PC-9 (cell line): ENCODE measurements at regions of chr3 and their contacts with region 1.

Region 1: DNA sequence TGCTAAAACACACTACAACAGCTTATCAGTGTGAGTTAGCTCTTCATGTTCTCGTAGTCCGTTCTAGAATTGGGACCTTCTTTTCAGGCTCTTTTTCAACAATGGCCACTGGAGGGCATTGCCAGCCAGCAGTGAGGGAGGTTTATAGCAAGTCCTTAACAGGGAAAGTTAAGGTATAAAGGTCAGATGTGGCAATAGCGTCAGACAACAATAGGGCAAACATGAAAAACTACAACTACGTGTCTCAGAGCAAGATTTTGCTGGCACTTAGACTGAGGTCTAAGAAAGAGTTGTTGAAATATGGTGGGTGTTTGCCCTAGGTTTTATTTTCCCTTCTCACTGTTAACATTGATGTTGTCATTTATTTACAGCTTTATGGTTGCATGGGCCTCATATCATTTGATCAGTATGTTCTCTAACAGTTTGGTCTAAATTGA is 161.4 kb downstream of the GMNC start:
- DNase-seq: peak; percentile 65 to 81
- H3K4me3 ChIP-seq: no peak overlapping the region
- H3K27ac ChIP-seq: no peak overlapping the region
- H3K4me1 ChIP-seq: peaks cover 21% of the 10 kb centered on the region; the same call in 1 of the 2 replicates
- H3K27me3 ChIP-seq: no peaks in the 10 kb centered on the region
- CTCF ChIP-seq: peak; percentile 87

Region 2: GRCh38 chr3:190224863-190225692 is 476.0 kb before region 1 on chr3:
- CTCF ChIA-PET with region 1: no interaction called
- POLR2A ChIA-PET with region 1: no interaction called
- intact Hi-C with region 1: loop called (anchors 2 kb)
- DNase-seq: peak in 1 of 2 experiments; percentile 12
- H3K4me3 ChIP-seq: no peak overlapping the region
- H3K27ac ChIP-seq: no peak overlapping the region
- H3K4me1 ChIP-seq: peaks cover 12% of the 10 kb centered on the region
- H3K27me3 ChIP-seq: no peaks in the 10 kb centered on the region
- CTCF ChIP-seq: peak; percentile 74

Region 3: GRCh38 chr3:190443257-190443656 is 257.9 kb before region 1 on chr3:
- CTCF ChIA-PET with region 1: interaction called, 3 read pairs
- POLR2A ChIA-PET with region 1: no interaction called
- intact Hi-C with region 1: loop called (anchors 5 kb)
- DNase-seq: no peak
- H3K4me3 ChIP-seq: no peak overlapping the region
- H3K27ac ChIP-seq: no peak overlapping the region
- H3K4me1 ChIP-seq: peaks cover 17% of the 10 kb centered on the region
- H3K27me3 ChIP-seq: no peaks in the 10 kb centered on the region
- CTCF ChIP-seq: peak; percentile 72

Region 4: GRCh38 chr3:190585805-190586630 is 115.1 kb before region 1 on chr3:
- CTCF ChIA-PET with region 1: interaction called, 6 read pairs
- POLR2A ChIA-PET with region 1: no interaction called
- intact Hi-C with region 1: loop called (anchors 5 kb)
- DNase-seq: peak; percentile 80 to 86
- H3K4me3 ChIP-seq: no peak overlapping the region
- H3K27ac ChIP-seq: peak overlapping the region; percentile 57
- H3K4me1 ChIP-seq: peaks cover 22% of the 10 kb centered on the region
- H3K27me3 ChIP-seq: no peaks in the 10 kb centered on the region
- CTCF ChIP-seq: no peak

Region 5: DNA sequence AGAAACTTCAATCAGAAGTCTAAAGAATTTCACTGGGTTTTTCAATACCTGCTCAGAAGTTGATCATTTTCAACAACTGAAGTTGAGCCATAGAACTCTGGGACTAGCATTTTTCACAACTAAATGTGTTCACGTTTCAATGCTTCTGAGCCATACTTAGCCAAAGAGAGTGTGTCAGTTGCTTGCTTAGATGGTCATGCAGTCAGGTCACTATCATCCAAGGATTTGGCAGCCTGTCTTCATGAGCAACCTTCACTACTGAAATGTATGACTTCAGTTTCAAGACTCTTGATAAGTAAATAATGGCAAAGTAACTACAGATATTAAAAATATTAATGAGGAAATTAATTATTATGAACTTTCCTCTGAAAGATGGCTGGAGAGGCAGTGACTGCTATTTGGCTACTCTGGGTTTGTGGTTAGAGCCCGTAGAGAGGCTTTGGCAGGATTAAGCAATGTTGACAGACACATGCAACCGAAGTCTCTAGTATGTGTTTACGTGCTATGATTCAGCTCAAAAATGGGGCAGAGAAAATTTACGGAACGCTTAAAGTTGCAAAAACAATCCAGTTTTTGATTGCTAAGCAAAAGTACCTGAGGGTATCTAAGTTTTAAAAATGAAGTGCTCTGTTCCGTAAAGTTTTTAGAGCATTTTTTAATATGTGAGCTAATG is 27.6 kb after region 1 on chr3:
- CTCF ChIA-PET with region 1: no interaction called
- POLR2A ChIA-PET with region 1: no interaction called
- intact Hi-C with region 1: no loop called
- DNase-seq: no peak
- H3K4me3 ChIP-seq: no peak overlapping the region
- H3K27ac ChIP-seq: no peak overlapping the region
- H3K4me1 ChIP-seq: no peaks in the 10 kb centered on the region
- H3K27me3 ChIP-seq: no peaks in the 10 kb centered on the region
- CTCF ChIP-seq: no peak

Region 6: DNA sequence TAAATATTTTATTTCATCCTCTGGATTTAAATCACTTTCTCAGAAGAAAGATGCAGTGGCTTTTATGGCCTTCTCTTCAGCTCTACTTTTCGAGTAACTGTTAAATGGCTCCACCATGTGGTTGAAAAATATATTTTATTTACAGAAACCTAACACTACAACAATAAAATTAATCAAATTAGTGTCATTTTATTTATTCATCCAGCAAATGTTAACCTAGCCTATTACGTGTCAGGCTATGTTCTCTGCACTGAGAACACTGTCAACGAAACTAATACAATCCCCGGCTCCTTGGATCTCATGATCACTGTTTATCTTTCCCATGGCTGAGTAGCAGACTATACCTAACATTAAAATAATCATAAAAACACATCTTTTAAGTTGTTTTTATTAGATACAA is 349.9 kb after region 1 on chr3:
- CTCF ChIA-PET with region 1: interaction called, 8 read pairs
- POLR2A ChIA-PET with region 1: no interaction called
- intact Hi-C with region 1: loop called (anchors 1 kb)
- DNase-seq: peak in 1 of 2 experiments; percentile 58
- H3K4me3 ChIP-seq: no peak overlapping the region
- H3K27ac ChIP-seq: no peak overlapping the region
- H3K4me1 ChIP-seq: no peaks in the 10 kb centered on the region
- H3K27me3 ChIP-seq: no peaks in the 10 kb centered on the region
- CTCF ChIP-seq: peak; percentile 87

Region 7: GRCh38 chr3:191412759-191413158 is 711.6 kb after region 1 on chr3:
- CTCF ChIA-PET with region 1: no interaction called
- POLR2A ChIA-PET with region 1: no interaction called
- intact Hi-C with region 1: loop called (anchors 5 kb)
- DNase-seq: peak in 1 of 2 experiments; percentile 41
- H3K4me3 ChIP-seq: no peak overlapping the region
- H3K27ac ChIP-seq: no peak overlapping the region
- H3K4me1 ChIP-seq: peaks cover 8% of the 10 kb centered on the region
- H3K27me3 ChIP-seq: no peaks in the 10 kb centered on the region
- CTCF ChIP-seq: no peak